Common myeloid progenitor, CD34-positive (primary cell): ENCODE measurements at regions of chr21 and their contacts with region 1.

Region 1: GRCh38 chr21:36630485-36631206 is 68.3 kb upstream of the SIM2 start:
- DNase-seq: peak; percentile 34 to 60 (median 52)
- H3K4me3 ChIP-seq: no peak overlapping the region
- H3K27ac ChIP-seq: no peak overlapping the region
- H3K4me1 ChIP-seq: no peaks in the 10 kb centered on the region
- H3K27me3 ChIP-seq: peaks cover 0 to 17% (median 0%) of the 10 kb centered on the region in 5 experiments

Region 2: GRCh38 chr21:36209626-36210171 is 420.9 kb before region 1 on chr21:
- CTCF ChIA-PET with region 1: no interaction called
- POLR2A ChIA-PET with region 1: no interaction called
- DNase-seq: peak; percentile 71 to 81 (median 79)
- H3K4me3 ChIP-seq: no peak overlapping the region
- H3K27ac ChIP-seq: no peak overlapping the region
- H3K4me1 ChIP-seq: peaks cover 0 to 5% (median 1%) of the 10 kb centered on the region in 4 experiments
- H3K27me3 ChIP-seq: no peaks in the 10 kb centered on the region

Region 3: DNA sequence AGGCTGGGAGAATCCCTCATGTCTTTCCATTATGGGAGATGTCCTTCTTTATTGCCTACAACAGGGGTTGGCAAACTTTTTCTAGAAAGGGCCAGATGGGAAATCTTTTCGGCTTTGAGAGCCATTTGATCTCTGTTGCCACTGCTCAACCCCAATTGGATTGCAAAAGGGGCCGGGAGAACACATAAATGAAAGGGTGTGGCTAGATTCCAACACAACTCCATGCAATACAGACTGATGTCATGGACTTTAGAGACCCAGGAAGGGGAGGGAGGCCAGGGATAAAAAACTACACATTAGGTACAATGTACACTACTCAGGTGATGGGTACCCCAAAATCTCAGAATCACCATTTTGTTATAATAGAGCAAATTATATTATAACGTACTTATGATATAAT is 29.3 kb before region 1 on chr21:
- CTCF ChIA-PET with region 1: no interaction called
- POLR2A ChIA-PET with region 1: no interaction called
- DNase-seq: no peak
- H3K4me3 ChIP-seq: no peak overlapping the region
- H3K27ac ChIP-seq: no peak overlapping the region
- H3K4me1 ChIP-seq: no peaks in the 10 kb centered on the region
- H3K27me3 ChIP-seq: peaks cover 0 to 4% (median 3%) of the 10 kb centered on the region in 5 experiments

Region 4: GRCh38 chr21:36927719-36928117 is 297.1 kb after region 1 on chr21:
- CTCF ChIA-PET with region 1: interaction called, 14 read pairs
- POLR2A ChIA-PET with region 1: no interaction called
- DNase-seq: peak; percentile 60 to 79 (median 67)
- H3K4me3 ChIP-seq: no peak overlapping the region
- H3K27ac ChIP-seq: no peak overlapping the region
- H3K4me1 ChIP-seq: no peaks in the 10 kb centered on the region
- H3K27me3 ChIP-seq: no peaks in the 10 kb centered on the region